ENCODE measurements at regions of chr5 and their contacts with region 1.

Region 1: GRCh38 chr5:91280362-91281269 is 102.5 kb downstream of the ARRDC3 start:
- DNase-seq: peak; percentile 95 to 97
- ATAC-seq: peak; percentile 95
- H3K4me3 ChIP-seq: peak overlapping the region; percentile 50
- H3K27ac ChIP-seq: peak overlapping the region; percentile 94
- H3K4me1 ChIP-seq: peaks cover 49% of the 10 kb centered on the region
- CTCF ChIP-seq: no peak
- EP300 ChIP-seq: peak; percentile 61 to 85; a peak in 4 of 5 replicates
- POLR2A ChIP-seq: peak; percentile 37; the same call in 1 of the 2 replicates
- RAD21 ChIP-seq: peak; percentile 3 to 45; a peak in 2 of 5 replicates

Region 2: DNA sequence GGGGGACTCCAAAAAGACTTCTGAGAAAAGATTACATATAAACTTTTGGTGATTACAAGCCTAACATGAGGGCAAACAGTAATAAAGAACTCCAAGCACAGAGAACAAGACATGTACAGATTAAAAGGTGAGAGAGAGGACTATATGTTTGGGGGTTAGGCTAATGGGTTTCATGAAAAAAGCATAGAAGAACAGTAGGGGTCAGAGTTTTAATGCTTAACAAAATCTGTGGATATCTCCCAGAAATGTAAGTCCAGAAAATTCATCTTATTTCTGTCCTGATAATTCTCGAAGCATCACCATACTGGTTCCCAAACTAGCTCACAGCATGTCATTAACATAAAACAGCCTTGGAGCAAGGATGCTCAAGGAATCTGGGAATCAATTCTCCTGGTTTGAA is 34.7 kb before region 1 on chr5:
- CTCF ChIA-PET with region 1: no interaction called
- POLR2A ChIA-PET with region 1: no interaction called
- DNase-seq: no peak
- ATAC-seq: no peak
- H3K4me3 ChIP-seq: no peak overlapping the region
- H3K27ac ChIP-seq: no peak overlapping the region
- H3K4me1 ChIP-seq: no peaks in the 10 kb centered on the region
- CTCF ChIP-seq: no peak
- EP300 ChIP-seq: no peak
- POLR2A ChIP-seq: no peak
- RAD21 ChIP-seq: peak in 1 of 2 experiments; percentile 20; a peak in 1 of 5 replicates

Region 3: DNA sequence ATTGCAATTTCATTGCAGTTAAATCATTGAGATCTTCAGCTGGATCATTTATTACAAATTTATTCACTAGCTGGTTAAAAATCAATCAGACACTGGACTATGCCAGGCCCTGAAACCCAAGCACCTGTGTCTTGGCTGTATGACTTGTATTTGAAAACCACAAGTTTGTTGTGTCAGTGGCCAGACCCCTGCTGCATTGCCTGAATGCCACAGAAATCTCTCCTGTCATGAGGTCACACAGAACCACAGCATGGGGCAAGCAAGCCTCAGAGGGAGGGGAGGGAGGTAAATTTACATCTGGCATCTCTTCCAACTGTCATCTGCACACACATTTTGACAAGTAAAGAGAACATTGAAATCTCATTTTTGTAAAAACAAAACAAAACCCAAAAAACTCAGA is 12.5 kb after region 1 on chr5:
- CTCF ChIA-PET with region 1: interaction called, 3 read pairs
- POLR2A ChIA-PET with region 1: interaction called, 11 read pairs
- DNase-seq: no peak
- ATAC-seq: peak in 1 of 2 experiments; percentile 16; a peak in 1 of 6 replicates
- H3K4me3 ChIP-seq: no peak overlapping the region
- H3K27ac ChIP-seq: peak overlapping the region in 1 of 2 experiments; percentile 57; a peak in 3 of 6 replicates
- H3K4me1 ChIP-seq: peaks cover 26% of the 10 kb centered on the region
- CTCF ChIP-seq: no peak
- EP300 ChIP-seq: no peak
- POLR2A ChIP-seq: no peak
- RAD21 ChIP-seq: no peak

Region 4: GRCh38 chr5:91311697-91312501 is 31.3 kb after region 1 on chr5:
- CTCF ChIA-PET with region 1: interaction called, 4 read pairs
- POLR2A ChIA-PET with region 1: interaction called, 50 read pairs
- DNase-seq: peak; percentile 86 to 94
- ATAC-seq: peak; percentile 78 to 80
- H3K4me3 ChIP-seq: peak overlapping the region; percentile 41
- H3K27ac ChIP-seq: peak overlapping the region; percentile 91 to 94
- H3K4me1 ChIP-seq: peaks cover 57% of the 10 kb centered on the region
- CTCF ChIP-seq: no peak
- EP300 ChIP-seq: peak; percentile 84 to 91; a peak in 4 of 5 replicates
- POLR2A ChIP-seq: no peak
- RAD21 ChIP-seq: peak; percentile 35 to 65; a peak in 4 of 5 replicates